Kidney (tissue), 22 donors: ENCODE measurements at regions of chrX and their contacts with region 1.

Region 1: GRCh38 chrX:75045369-75045768 is 110.7 kb downstream of the ABCB7 start:
- DNase-seq: no peak
- H3K4me3 ChIP-seq: no peak overlapping the region
- H3K27ac ChIP-seq: no peak overlapping the region
- H3K4me1 ChIP-seq: no peaks in the 10 kb centered on the region
- H3K27me3 ChIP-seq: no peaks in the 10 kb centered on the region
- CTCF ChIP-seq: no peak

Region 2: DNA sequence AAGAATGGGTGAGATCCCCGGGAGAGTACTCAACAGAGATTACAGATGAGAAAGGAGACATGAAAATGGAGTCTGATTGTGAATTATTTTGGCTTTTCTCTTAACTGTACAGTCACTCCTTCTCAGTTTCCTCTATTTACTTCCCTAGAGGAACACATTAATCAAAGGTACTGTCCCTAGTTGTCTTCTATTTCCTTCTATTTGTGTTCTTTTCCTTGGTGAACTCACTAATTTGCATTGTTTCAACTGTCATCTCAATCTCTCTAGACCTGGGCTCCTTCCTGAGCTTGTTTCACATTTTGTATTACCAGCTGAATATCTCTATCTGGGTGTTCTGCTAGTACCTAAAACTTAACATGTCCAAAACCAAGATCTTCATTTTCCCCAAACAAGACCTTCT is 51.0 kb after region 1 on chrX:
- intact Hi-C with region 1: loop called (anchors 5 kb)
- DNase-seq: no peak
- H3K4me3 ChIP-seq: no peak overlapping the region
- H3K27ac ChIP-seq: no peak overlapping the region
- H3K4me1 ChIP-seq: no peaks in the 10 kb centered on the region
- H3K27me3 ChIP-seq: no peaks in the 10 kb centered on the region
- CTCF ChIP-seq: no peak